GM10248 (cell line): ENCODE measurements at regions of chr6 and their contacts with region 1.

Region 1: GRCh38 chr6:33700391-33701050 is 11.0 kb downstream of the UQCC2 start:
- DNase-seq: peak; percentile 77
- CTCF ChIP-seq: peak; percentile 82

Region 2: GRCh38 chr6:33147807-33148666 is 552.5 kb before region 1 on chr6:
- CTCF ChIA-PET with region 1: no interaction called
- POLR2A ChIA-PET with region 1: no interaction called
- DNase-seq: peak; percentile 39
- CTCF ChIP-seq: peak; percentile 77

Region 3: GRCh38 chr6:33607784-33608161 is 92.7 kb before region 1 on chr6:
- CTCF ChIA-PET with region 1: interaction called, 17 read pairs
- POLR2A ChIA-PET with region 1: no interaction called
- DNase-seq: peak; percentile 70
- CTCF ChIP-seq: peak; percentile 55

Region 4: DNA sequence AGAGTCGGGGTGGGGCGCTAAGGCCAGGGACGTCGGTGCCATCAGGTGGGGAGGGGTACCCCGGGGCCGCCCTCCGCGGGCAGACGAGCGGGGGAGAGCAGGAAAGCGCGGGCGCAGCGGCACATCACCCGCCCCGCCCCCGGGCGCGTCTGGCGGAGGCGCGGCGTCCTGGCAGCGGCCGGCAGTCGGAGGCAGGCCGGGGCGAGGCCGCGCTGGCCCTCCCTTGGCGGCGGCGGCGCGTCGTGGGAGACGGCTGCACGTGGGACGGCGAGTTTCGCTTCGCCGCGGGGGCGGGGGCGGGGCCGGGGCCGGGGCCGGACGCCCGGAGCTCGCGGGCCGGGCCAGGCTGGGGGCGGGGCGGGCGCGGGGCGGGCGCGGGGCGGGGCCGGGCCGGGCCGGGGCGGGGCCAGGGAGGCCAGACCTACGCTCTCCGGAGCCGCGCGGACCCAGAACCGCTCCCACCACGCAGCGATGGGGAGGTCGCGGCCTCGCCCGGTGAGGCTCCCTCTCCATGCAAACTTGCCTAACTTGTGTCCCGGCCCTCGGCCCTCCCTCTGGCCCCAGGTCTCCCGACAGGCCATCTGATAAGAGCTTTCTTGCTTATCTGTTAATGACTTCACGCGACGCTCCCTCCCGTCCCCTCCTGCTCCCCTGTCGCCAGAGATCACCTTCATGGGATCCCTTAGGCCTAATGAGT is 66.9 kb before region 1 on chr6:
- CTCF ChIA-PET with region 1: interaction called, 12 read pairs
- POLR2A ChIA-PET with region 1: no interaction called
- DNase-seq: peak; percentile 91
- CTCF ChIP-seq: no peak

Region 5: DNA sequence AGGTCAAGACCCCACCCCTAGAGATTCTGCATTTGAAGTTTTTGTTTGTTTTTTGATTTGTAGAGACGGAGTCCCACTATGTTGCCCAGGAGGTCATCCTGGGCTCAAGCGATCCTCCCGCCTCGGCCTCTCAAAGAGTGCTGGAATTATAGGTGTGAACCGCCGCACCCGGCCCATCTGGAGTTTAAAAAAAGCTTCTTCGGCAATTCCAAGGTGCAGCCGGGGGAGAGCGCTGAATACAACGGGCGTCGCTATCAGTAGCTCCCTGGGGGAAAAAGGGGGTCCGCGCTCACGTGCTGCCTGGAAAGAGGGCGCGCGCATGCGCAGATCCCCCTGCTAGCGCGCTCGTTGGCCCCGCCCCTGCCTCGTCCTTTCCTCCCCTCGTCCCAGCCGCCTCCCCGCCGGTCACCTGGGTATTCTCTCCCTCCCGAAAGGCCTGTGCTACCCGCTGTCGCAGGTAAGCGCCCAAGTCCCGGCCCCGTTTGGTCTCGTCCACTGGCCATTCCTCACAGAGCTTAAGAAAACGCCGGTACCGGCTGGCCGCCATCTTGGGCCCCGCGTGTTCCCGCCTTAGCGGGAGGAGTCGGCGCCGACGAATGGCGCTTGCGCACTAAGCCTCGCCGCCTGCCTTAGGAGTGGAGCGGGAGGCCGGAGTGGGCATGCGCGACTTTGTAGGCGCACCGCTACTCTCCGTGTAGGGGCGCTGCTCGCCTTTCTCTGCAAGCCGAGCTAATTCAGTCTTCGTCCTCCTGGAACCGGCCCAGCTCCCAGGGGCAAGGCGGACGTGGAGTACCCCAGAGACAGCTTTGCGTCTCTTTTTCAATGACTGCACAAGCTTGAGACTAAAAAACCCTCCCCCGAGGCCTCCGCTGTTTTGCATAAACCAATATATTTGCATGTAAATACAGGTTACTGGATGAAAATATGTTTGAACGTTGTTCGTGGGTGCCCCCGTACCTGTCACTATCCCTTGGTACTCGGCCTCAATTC is 10.9 kb after region 1 on chr6 and contains the start of gene UQCC2:
- CTCF ChIA-PET with region 1: interaction called, 62 read pairs
- POLR2A ChIA-PET with region 1: interaction called, 6 read pairs
- DNase-seq: peak; percentile 98
- CTCF ChIP-seq: peak; percentile 66

Region 6: DNA sequence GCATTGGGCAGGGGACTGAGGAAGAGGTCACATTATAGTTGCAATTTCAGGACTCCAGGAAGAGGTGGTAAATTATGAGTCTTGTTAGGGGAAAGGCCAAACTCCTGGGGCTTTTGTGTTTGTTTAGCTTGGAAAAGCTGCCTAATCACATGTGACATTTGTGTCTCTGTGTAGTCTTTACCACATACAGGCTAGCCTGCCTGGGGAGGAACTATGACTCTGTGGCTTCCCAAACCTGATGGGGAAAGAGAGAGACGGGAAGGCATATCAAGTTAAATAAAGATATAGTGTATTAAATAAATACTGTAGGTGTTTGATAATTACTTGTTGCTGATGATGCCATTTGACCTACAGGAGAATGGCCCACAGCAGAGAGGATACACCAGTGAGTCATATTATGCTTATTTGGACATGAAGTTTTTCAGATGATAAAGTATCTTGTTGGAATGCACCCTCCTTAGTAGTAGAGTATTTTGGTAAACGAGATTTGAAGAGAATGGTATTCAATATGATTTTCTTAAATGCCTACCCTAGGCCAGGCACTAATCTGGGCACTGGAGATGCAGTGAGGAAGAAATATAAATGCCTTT is 1095.4 kb after region 1 on chr6:
- CTCF ChIA-PET with region 1: no interaction called
- POLR2A ChIA-PET with region 1: no interaction called
- DNase-seq: no peak
- CTCF ChIP-seq: no peak